HepG2 (cell line): ENCODE measurements at regions of chr20 and their contacts with region 1.

Region 1: DNA sequence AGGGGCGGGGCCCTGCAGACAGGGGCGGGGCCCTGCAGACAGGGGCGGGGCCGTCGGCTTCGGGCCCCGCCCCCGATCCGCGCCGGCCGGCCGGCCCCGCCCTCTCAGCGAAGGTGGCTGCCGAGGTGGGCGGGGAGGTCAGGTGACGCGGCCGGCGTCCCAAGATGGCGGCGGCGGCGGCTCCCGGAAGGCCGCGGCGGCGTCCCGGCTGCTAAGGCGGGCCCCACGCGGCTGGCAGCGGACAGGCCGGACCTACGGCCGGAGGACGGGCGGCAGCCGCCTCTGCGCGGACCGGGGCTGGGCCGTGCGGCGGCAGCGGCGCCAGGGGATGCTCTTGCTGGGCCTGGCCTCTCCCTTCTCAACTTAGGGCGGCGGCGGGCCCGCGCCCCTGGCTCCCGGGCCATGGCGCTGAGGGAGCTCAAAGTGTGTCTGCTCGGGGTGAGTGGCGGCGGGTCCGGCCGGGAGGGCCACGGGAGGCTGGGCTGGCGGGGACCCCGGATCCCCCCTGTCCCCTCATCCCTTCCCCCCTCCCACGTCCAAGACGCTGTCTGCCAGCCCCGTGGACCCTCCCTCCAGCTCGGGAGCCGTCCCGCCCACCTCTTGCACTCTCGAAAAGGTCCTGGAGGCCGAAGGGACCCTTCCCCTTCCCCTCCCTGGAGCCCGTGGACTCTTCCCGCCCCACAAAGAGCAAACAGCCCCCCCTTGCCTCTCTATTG is at the start of gene RAB22A:
- DNase-seq: peak; percentile 56
- ATAC-seq: peak; percentile 82
- H3K4me3 ChIP-seq: peak within 1 kb of the TSS; percentile 98 to 100 (median 99)
- H3K27ac ChIP-seq: peak within 1 kb of the TSS; percentile 65
- H3K4me1 ChIP-seq: peaks cover 40% of the 10 kb centered on the region
- H3K27me3 ChIP-seq: no peaks in the 10 kb centered on the region; a peak in 1 of 5 replicates
- CTCF ChIP-seq: no peak; the same call in 1 of the 2 replicates
- EP300 ChIP-seq: peak; percentile 8 to 37; a peak in 1 of 4 replicates
- POLR2A ChIP-seq: peak; percentile 67 to 72
- RAD21 ChIP-seq: peak; percentile 74
- total RNA-seq, gene RAB22A: 11.2 and 16.2 TPM in 2 replicates

Region 2: GRCh38 chr20:58327211-58327610 is 17.5 kb after region 1 on chr20:
- CTCF ChIA-PET with region 1: no interaction called
- POLR2A ChIA-PET with region 1: interaction called, 4 read pairs
- in situ Hi-C with region 1: no loop called
- intact Hi-C with region 1: loop called (anchors 2 kb)
- DNase-seq: peak; percentile 29
- ATAC-seq: peak; percentile 70
- H3K4me3 ChIP-seq: no peak overlapping the region
- H3K27ac ChIP-seq: no peak overlapping the region
- H3K4me1 ChIP-seq: peaks cover 12% of the 10 kb centered on the region
- H3K27me3 ChIP-seq: no peaks in the 10 kb centered on the region
- CTCF ChIP-seq: no peak
- EP300 ChIP-seq: no peak
- POLR2A ChIP-seq: no peak
- RAD21 ChIP-seq: no peak